Ascending aorta (tissue), 2 donors: ENCODE measurements at regions of chr19 and their contacts with region 1.

Region 1: GRCh38 chr19:45016388-45017319 is 15.4 kb downstream of the RELB start:
- DNase-seq: peak; percentile 19 to 75
- H3K4me3 ChIP-seq: no peak overlapping the region
- H3K27ac ChIP-seq: peak overlapping the region in 1 of 2 donors; percentile 28
- H3K4me1 ChIP-seq: no peaks in the 10 kb centered on the region
- H3K27me3 ChIP-seq: no peaks in the 10 kb centered on the region
- CTCF ChIP-seq: peak; percentile 40 to 57 (median 45)

Region 2: GRCh38 chr19:45001087-45001739 is 15.4 kb before region 1 on chr19 and contains the start of gene RELB:
- intact Hi-C with region 1: no loop called
- DNase-seq: peak; percentile 73 to 97
- H3K4me3 ChIP-seq: peak within 1 kb of the TSS; percentile 82 to 100
- H3K27ac ChIP-seq: peak within 1 kb of the TSS; percentile 99 to 100
- H3K4me1 ChIP-seq: peaks cover 0 to 5% of the 10 kb centered on the region in 2 donors
- H3K27me3 ChIP-seq: no peaks in the 10 kb centered on the region
- CTCF ChIP-seq: no peak
- total RNA-seq, gene RELB: 8.7 TPM

Region 3: DNA sequence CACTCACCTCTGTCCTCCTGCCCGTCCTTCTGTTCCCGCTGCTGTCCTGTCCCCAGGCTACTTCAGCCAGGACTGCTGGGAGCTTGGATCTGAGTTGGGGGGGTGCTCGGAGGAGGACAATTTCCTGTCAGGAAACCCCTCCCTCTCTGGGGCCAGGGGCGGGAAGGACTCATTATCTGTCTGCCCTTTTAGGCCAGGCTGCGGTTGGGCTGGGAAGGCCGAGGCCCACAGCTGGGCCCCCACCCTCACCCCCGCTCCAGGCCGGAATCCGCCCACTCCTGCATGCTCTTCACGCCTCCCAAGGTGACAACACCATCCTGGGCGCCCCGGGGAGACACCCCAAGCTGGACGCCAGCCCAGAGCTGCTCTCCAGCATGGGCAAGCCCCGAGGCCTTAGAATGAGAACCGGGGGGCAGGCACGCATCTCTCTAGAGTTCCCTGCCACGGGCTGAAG is 228.7 kb after region 1 on chr19 and contains the start of gene EXOC3L2:
- intact Hi-C with region 1: loop called (anchors 10 kb)
- DNase-seq: no peak
- H3K4me3 ChIP-seq: no peak within 1 kb of the TSS
- H3K27ac ChIP-seq: no peak within 1 kb of the TSS
- H3K4me1 ChIP-seq: peaks cover 0 to 6% of the 10 kb centered on the region in 2 donors
- H3K27me3 ChIP-seq: no peaks in the 10 kb centered on the region
- CTCF ChIP-seq: no peak
- total RNA-seq, gene EXOC3L2: 33.5 TPM